ENCODE measurements at regions of chr3 and their contacts with region 1.

Region 1: GRCh38 chr3:44648564-44649229 is at the start of gene ZNF35:
- DNase-seq: peak; percentile 1
- H3K4me3 Mint-ChIP-seq: peak within 1 kb of the TSS; percentile 86
- H3K27ac Mint-ChIP-seq: peak within 1 kb of the TSS; percentile 40
- H3K4me1 Mint-ChIP-seq: no peaks in the 10 kb centered on the region
- H3K27me3 Mint-ChIP-seq: no peaks in the 10 kb centered on the region
- total RNA-seq, gene ZNF35: 4.8 and 5.5 TPM in 2 replicates

Region 2: GRCh38 chr3:44729384-44729910 is 80.8 kb after region 1 on chr3 and contains the start of gene ZNF501:
- intact Hi-C with region 1: loop called (anchors 10 kb)
- DNase-seq: peak; percentile 71
- H3K4me3 Mint-ChIP-seq: peak within 1 kb of the TSS; percentile 93
- H3K27ac Mint-ChIP-seq: peak within 1 kb of the TSS; percentile 65
- H3K4me1 Mint-ChIP-seq: peaks cover 15% of the 10 kb centered on the region
- H3K27me3 Mint-ChIP-seq: no peaks in the 10 kb centered on the region
- total RNA-seq, gene ZNF501: 1.5 and 1.6 TPM in 2 replicates